Psoas muscle (tissue), 8 donors: ENCODE measurements at regions of chr3 and their contacts with region 1.

Region 1: DNA sequence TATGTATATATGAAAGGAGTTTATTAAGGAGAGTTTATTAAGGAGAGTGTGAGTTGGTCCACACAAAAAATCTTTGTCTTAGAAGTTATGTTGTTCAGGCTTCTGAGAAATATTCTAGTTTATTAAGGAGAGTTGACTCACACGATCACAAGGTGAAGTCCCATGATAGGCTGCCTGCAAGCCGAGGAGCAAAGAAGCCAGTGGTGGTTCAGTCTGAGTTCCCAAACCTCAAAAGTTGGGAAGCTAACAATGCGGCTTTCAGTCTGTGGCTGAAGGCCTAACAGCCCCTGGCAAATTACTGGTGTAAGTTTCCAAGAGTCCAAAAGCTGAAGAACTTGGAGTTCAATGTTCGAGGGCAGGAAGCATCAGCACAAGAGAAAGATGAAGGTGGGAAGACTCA is 42.4 kb upstream of the DAZL start:
- DNase-seq: no peak
- ATAC-seq: no peak
- H3K4me3 ChIP-seq: no peak overlapping the region
- H3K27ac ChIP-seq: no peak overlapping the region
- H3K4me1 ChIP-seq: no peaks in the 10 kb centered on the region
- H3K27me3 ChIP-seq: no peaks in the 10 kb centered on the region
- CTCF ChIP-seq: no peak

Region 2: GRCh38 chr3:16090024-16090423 is 557.6 kb before region 1 on chr3:
- intact Hi-C with region 1: no loop called
- DNase-seq: no peak
- ATAC-seq: peak; percentile 40 to 59 (median 52)
- H3K4me3 ChIP-seq: no peak overlapping the region
- H3K27ac ChIP-seq: peak overlapping the region; percentile 19
- H3K4me1 ChIP-seq: peaks cover 45% of the 10 kb centered on the region
- H3K27me3 ChIP-seq: no peaks in the 10 kb centered on the region
- CTCF ChIP-seq: no peak

Region 3: GRCh38 chr3:16695346-16696109 is 47.9 kb after region 1 on chr3:
- intact Hi-C with region 1: loop called in 1 of 2 experiments (anchors 1 kb)
- DNase-seq: no peak
- ATAC-seq: no peak
- H3K4me3 ChIP-seq: no peak overlapping the region
- H3K27ac ChIP-seq: no peak overlapping the region
- H3K4me1 ChIP-seq: no peaks in the 10 kb centered on the region
- H3K27me3 ChIP-seq: no peaks in the 10 kb centered on the region
- CTCF ChIP-seq: no peak